ENCODE measurements at regions of chr4 and their contacts with region 1.

Region 1: GRCh38 chr4:109729718-109730618 is at the start of gene PLA2G12A:
- DNase-seq: peak; percentile 72 to 90 (median 84)
- ATAC-seq: peak; percentile 85 to 89
- H3K4me3 Mint-ChIP-seq: peak within 1 kb of the TSS; percentile 82 to 97 (median 92)
- H3K27ac Mint-ChIP-seq: peak within 1 kb of the TSS; percentile 74 to 97 (median 93)
- H3K4me1 Mint-ChIP-seq: peaks cover 19 to 38% (median 25%) of the 10 kb centered on the region in 4 donors
- H3K27me3 Mint-ChIP-seq: no peaks in the 10 kb centered on the region
- polyA plus RNA-seq, gene PLA2G12A: 51.6 to 56.9 (median 53.7) TPM

Region 2: GRCh38 chr4:109433205-109434006 is 296.6 kb before region 1 on chr4 and contains the start of gene SEC24B:
- POLR2A ChIA-PET with region 1: interaction called, 10 read pairs
- DNase-seq: peak; percentile 85 to 94 (median 90)
- ATAC-seq: peak; percentile 89
- H3K4me3 Mint-ChIP-seq: peak within 1 kb of the TSS; percentile 77 to 95 (median 90)
- H3K27ac Mint-ChIP-seq: peak within 1 kb of the TSS; percentile 86 to 97 (median 94)
- H3K4me1 Mint-ChIP-seq: peaks cover 14 to 53% (median 51%) of the 10 kb centered on the region in 4 donors
- H3K27me3 Mint-ChIP-seq: no peaks in the 10 kb centered on the region
- polyA plus RNA-seq, gene SEC24B: 8.3 to 17.2 (median 10.5) TPM

Region 3: DNA sequence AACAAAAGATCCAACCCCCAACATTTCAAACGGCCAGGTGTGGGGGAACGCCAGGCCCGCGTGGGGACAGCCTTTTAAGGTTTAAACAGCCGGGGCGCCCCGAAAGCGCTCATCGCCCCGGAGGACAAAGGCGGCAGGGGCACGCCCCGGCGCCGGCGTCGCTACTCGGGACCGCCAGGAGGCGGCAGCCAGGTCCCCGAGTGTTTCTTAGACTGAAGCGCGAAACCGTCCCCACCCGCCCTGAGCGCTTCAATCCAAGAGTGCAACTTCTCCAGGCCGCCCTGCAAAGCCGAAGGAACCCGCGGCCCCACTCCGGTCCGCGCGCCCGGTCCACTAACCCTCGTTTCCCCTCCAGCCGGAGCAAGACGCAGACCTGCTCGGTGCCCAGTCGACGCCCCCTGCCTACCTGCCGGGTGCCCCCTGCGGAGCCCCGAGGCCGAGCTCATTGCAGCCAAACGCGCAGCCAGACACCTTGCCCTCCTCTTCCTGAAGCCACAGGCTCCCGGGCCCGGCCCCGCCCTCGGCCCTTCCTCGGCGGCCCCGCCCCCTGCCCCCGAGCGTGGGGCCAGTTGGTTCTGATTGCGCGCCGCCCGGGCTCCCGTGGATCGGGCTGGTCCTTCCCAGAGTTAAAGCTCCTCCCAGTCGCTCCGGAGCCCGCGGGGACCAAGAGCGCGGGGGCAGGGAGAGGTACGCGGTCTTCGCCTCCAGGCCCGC is 26.9 kb before region 1 on chr4 and contains the start of gene CASP6:
- POLR2A ChIA-PET with region 1: interaction called, 11 read pairs
- DNase-seq: peak; percentile 62 to 82 (median 73)
- ATAC-seq: peak; percentile 84 to 90
- H3K4me3 Mint-ChIP-seq: peak within 1 kb of the TSS; percentile 90 to 98 (median 94)
- H3K27ac Mint-ChIP-seq: peak within 1 kb of the TSS; percentile 82 to 96 (median 94)
- H3K4me1 Mint-ChIP-seq: peaks cover 28 to 48% (median 42%) of the 10 kb centered on the region in 4 donors
- H3K27me3 Mint-ChIP-seq: no peaks in the 10 kb centered on the region
- polyA plus RNA-seq, gene CASP6: 57.2 to 87.7 (median 73.6) TPM

Measured in naive thymus-derived CD8-positive, alpha-beta T cell (primary cell).